ENCODE measurements at regions of chr7 and their contacts with region 1.

Region 1: DNA sequence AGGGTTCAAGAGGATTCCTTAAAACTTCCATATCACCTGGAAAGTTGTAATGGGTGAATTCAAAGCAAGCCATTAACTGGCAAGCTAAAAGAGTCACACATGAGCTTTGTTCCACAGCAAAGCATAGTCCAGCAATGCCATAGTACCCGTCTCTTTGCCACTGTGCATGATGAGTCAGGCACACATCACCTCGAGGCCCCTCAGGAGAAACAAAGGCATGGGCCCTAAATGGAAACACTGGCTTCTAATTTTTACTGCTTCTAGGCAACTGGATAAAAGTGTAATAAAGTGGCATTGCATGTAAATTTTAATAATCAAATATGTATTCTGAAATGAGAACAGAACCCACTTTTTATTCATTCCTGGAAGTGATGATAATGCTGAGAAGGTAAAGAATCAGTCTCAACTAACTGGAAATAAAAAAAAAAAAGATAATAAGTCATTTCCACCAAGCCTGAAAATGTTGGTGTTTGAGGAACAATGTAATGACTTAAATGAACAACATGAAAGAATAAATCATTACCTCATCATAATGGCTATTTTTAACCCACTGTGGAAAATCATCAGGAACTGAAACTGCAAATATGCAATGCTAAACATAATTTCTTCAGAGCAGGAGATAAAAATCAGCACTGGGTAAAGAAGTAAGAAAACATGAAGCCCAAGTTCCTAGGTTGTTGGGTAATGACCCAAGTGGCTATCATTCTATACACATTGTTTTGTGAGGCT is 104.9 kb downstream of the CDK6 start:
- DNase-seq: no peak
- H3K4me3 Mint-ChIP-seq: peak overlapping the region; percentile 64
- H3K27ac Mint-ChIP-seq: peak overlapping the region; percentile 95
- H3K4me1 Mint-ChIP-seq: peaks cover 54% of the 10 kb centered on the region
- H3K27me3 Mint-ChIP-seq: no peaks in the 10 kb centered on the region

Region 2: GRCh38 chr7:91503934-91504555 is 1227.5 kb before region 1 on chr7:
- intact Hi-C with region 1: no loop called
- DNase-seq: no peak
- H3K4me3 Mint-ChIP-seq: no peak overlapping the region
- H3K27ac Mint-ChIP-seq: no peak overlapping the region
- H3K4me1 Mint-ChIP-seq: no peaks in the 10 kb centered on the region
- H3K27me3 Mint-ChIP-seq: no peaks in the 10 kb centered on the region

Region 3: DNA sequence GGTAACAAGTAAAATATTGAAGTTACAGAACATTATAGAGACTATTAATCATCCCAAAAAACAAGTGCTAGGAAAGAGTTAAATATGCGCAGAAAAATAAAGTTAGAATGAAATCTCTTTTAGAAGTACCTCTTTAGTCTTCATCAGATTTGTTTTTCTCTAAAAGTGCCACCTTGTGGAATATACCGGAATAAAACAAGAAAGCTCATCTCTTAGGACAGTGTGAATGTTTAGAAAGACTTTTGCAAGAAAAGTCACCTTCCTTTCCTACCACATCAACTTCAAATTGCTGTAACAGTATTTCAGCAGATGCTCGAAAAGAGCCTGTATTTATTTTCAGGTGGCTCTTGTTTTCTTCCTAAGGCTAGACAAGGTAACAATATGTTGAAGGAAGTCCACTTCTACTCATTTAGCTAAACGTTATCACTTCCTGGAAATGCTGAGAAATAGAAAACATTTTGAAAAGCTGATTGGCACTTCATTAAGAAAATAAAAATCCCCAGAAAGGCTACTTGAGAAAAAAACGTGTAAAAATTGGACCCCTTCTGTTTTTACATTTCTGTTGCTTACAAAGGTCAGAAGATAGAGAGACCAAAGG is 121.5 kb before region 1 on chr7:
- intact Hi-C with region 1: no loop called
- DNase-seq: no peak
- H3K4me3 Mint-ChIP-seq: no peak overlapping the region
- H3K27ac Mint-ChIP-seq: peak overlapping the region; percentile 47
- H3K4me1 Mint-ChIP-seq: peaks cover 32% of the 10 kb centered on the region
- H3K27me3 Mint-ChIP-seq: no peaks in the 10 kb centered on the region

Region 4: GRCh38 chr7:92708111-92709042 is 23.1 kb before region 1 on chr7:
- intact Hi-C with region 1: loop called (anchors 1 kb)
- DNase-seq: no peak
- H3K4me3 Mint-ChIP-seq: no peak overlapping the region
- H3K27ac Mint-ChIP-seq: peak overlapping the region; percentile 79
- H3K4me1 Mint-ChIP-seq: peaks cover 34% of the 10 kb centered on the region
- H3K27me3 Mint-ChIP-seq: no peaks in the 10 kb centered on the region

Region 5: GRCh38 chr7:92717993-92718716 is 13.3 kb before region 1 on chr7:
- intact Hi-C with region 1: loop called (anchors 1 kb)
- DNase-seq: peak; percentile 92
- H3K4me3 Mint-ChIP-seq: peak overlapping the region; percentile 73
- H3K27ac Mint-ChIP-seq: peak overlapping the region; percentile 97
- H3K4me1 Mint-ChIP-seq: peaks cover 52% of the 10 kb centered on the region
- H3K27me3 Mint-ChIP-seq: no peaks in the 10 kb centered on the region

Region 6: DNA sequence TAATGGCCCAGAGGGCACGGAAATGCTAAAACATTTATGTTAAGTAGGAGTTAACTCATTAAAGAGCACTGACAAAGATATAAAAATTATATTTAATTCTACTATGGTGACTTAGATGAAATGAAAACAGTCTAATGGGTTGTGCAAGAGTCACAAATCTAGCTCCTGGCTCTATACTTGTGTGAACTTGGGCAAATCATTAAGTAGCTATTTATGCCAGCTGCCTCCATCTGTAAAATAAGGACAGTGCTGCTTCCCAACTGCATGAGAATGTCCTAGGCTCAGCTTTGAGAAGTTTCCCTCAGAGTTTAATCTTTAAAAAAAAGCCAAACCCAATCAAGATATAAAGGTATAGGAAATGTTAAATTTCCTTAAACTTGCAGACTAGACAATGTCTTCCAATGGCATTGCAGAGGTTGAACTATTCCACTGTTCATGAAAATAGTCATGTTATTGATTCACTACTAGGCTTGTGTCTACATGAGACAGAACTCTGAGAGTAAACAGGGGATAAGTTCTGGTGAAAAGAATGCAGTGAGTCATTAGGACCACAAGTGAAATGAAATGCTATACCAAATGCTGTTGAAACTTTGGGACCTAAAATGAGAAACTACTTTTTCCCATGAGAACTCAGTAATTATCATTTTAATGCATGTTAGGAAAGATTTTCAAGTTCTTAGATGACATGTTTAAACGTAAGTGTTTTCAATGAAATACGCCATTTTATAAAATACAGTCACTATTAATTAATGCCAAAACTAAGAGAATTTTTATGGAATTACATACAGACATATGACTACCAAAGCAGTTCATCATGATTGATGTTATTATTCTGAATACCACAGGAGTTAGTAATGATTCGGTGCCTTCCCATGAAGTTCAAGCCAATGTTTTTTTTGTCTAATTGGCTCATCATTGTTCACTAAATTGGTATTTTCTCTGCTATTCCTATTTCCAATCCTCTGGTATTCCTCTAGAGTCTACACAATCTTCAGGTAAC is 20.7 kb after region 1 on chr7:
- intact Hi-C with region 1: loop called (anchors 1 kb)
- DNase-seq: no peak
- H3K4me3 Mint-ChIP-seq: no peak overlapping the region
- H3K27ac Mint-ChIP-seq: peak overlapping the region; percentile 83
- H3K4me1 Mint-ChIP-seq: peaks cover 64% of the 10 kb centered on the region
- H3K27me3 Mint-ChIP-seq: no peaks in the 10 kb centered on the region

Measured in activated CD4-positive, alpha-beta T cell treated with anti-CD3 and anti-CD28 coated beads, Interleukin-2, amount 10 ng/mL, durations not matched to agents 24 days and 14 days (primary cell).